Activated CD8-positive, alpha-beta T cell treated with anti-CD3 and anti-CD28 coated beads for 36 hours (primary cell): ENCODE measurements at regions of chr3 and their contacts with region 1.

Region 1: GRCh38 chr3:133426721-133427120 is 26.9 kb downstream of the BFSP2 start:
- DNase-seq: no peak
- ATAC-seq: peak; percentile 41
- H3K4me3 Mint-ChIP-seq: no peak overlapping the region
- H3K27ac Mint-ChIP-seq: no peak overlapping the region
- H3K4me1 Mint-ChIP-seq: peaks cover 6% of the 10 kb centered on the region
- H3K27me3 Mint-ChIP-seq: no peaks in the 10 kb centered on the region
- CTCF ChIP-seq: no peak

Region 2: DNA sequence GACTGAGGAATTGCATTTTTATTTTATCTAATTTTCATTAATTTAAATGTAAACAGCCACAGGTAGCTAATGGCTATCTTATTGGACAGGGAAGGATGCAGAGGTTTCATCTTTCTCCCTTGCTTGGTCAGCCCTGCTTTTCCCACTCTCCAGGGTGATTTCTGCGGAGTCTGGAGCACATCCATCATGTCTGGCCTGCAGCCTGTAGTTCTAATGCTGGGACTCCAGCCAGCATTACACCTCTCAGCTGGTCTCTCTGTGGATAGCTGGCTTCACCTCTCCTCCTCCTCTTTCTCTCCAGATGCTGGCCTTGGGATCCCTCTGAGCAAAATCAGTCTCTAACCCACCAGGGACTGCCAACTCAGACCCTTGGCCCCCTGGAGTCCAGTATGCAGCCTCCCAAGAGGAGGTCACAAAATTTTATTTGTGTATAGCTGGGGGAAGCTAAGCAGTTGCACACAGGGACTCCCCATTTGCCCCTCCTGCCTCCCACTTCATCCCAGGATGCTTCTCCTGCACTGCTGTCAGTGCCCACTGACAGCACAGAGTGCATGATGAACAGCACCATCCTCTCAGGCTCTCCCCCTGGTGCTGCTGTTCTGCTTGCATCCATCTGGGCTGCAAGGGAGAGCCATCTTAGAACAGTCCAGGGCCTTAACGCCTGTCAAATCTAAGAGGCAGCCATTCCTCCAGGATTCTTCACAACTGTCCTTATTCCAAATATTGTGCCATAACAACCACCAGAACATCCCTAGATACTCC is 25.2 kb before region 1 on chr3:
- CTCF ChIA-PET with region 1: interaction called, 12 read pairs
- POLR2A ChIA-PET with region 1: no interaction called
- intact Hi-C with region 1: no loop called
- DNase-seq: no peak
- ATAC-seq: no peak
- H3K4me3 Mint-ChIP-seq: no peak overlapping the region
- H3K27ac Mint-ChIP-seq: no peak overlapping the region
- H3K4me1 Mint-ChIP-seq: no peaks in the 10 kb centered on the region
- H3K27me3 Mint-ChIP-seq: no peaks in the 10 kb centered on the region
- CTCF ChIP-seq: no peak

Region 3: DNA sequence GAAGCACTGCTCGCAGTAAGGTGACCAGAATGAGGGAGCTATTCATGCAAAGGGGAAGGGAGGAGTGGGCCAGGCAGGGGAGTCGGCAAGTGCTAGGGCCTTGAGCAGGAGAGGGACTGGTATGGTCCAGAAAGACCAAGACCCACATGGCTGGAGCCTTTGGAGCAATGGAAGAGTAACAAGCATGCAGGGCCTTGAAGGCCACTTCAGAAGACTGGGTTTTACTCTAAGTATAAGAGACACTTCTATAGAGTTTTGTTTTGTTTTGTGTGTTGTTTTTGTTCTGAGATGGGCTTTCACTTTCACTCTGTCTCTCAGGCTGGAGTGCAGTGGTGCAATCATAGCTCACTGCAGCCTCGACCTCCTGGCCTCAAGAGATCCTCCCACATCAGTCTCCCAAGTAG is 15.1 kb after region 1 on chr3:
- CTCF ChIA-PET with region 1: interaction called, 12 read pairs
- POLR2A ChIA-PET with region 1: no interaction called
- intact Hi-C with region 1: no loop called
- DNase-seq: peak; percentile 28
- ATAC-seq: peak; percentile 79
- H3K4me3 Mint-ChIP-seq: peak overlapping the region; percentile 69
- H3K27ac Mint-ChIP-seq: peak overlapping the region; percentile 80
- H3K4me1 Mint-ChIP-seq: peaks cover 28% of the 10 kb centered on the region
- H3K27me3 Mint-ChIP-seq: no peaks in the 10 kb centered on the region
- CTCF ChIP-seq: no peak

Region 4: GRCh38 chr3:133627789-133628188 is 201.1 kb after region 1 on chr3:
- CTCF ChIA-PET with region 1: no interaction called
- POLR2A ChIA-PET with region 1: no interaction called
- intact Hi-C with region 1: no loop called
- DNase-seq: no peak
- ATAC-seq: no peak
- H3K4me3 Mint-ChIP-seq: no peak overlapping the region
- H3K27ac Mint-ChIP-seq: no peak overlapping the region
- H3K4me1 Mint-ChIP-seq: no peaks in the 10 kb centered on the region
- H3K27me3 Mint-ChIP-seq: no peaks in the 10 kb centered on the region
- CTCF ChIP-seq: no peak